ENCODE measurements at regions of chr22 and their contacts with region 1.

Region 1: GRCh38 chr22:42919199-42919598 is 62.1 kb upstream of the ARFGAP3 start:
- DNase-seq: no peak
- ATAC-seq: peak; percentile 36; the same call in 2 of the 3 replicates
- H3K4me3 ChIP-seq: no peak overlapping the region
- H3K27ac ChIP-seq: peak overlapping the region; percentile 33; the same call in 1 of the 2 replicates
- H3K4me1 ChIP-seq: no peaks in the 10 kb centered on the region; the same call in 1 of the 2 replicates
- H3K27me3 ChIP-seq: no peaks in the 10 kb centered on the region
- CTCF ChIP-seq: no peak
- EP300 ChIP-seq: no peak
- POLR2A ChIP-seq: no peak
- RAD21 ChIP-seq: no peak

Region 2: GRCh38 chr22:42889304-42889703 is 29.9 kb before region 1 on chr22:
- CTCF ChIA-PET with region 1: interaction called, 5 read pairs
- POLR2A ChIA-PET with region 1: interaction called, 7 read pairs
- RAD21 ChIA-PET with region 1: interaction called, 16 read pairs
- SMC1A ChIA-PET with region 1: interaction called, 16 read pairs
- in situ Hi-C with region 1: no loop called
- intact Hi-C with region 1: no loop called
- DNase-seq: peak; percentile 97
- ATAC-seq: peak; percentile 90
- H3K4me3 ChIP-seq: peak overlapping the region; percentile 19; the same call in 1 of the 2 replicates
- H3K27ac ChIP-seq: peak overlapping the region; percentile 84
- H3K4me1 ChIP-seq: peaks cover 58% of the 10 kb centered on the region
- H3K27me3 ChIP-seq: no peaks in the 10 kb centered on the region
- CTCF ChIP-seq: no peak
- EP300 ChIP-seq: peak; percentile 89 to 93
- POLR2A ChIP-seq: peak; percentile 52
- RAD21 ChIP-seq: no peak

Region 3: GRCh38 chr22:42895087-42895486 is 24.1 kb before region 1 on chr22:
- CTCF ChIA-PET with region 1: interaction called, 5 read pairs
- POLR2A ChIA-PET with region 1: interaction called, 7 read pairs
- RAD21 ChIA-PET with region 1: interaction called, 16 read pairs
- SMC1A ChIA-PET with region 1: interaction called, 16 read pairs
- in situ Hi-C with region 1: no loop called
- intact Hi-C with region 1: no loop called
- DNase-seq: peak; percentile 76
- ATAC-seq: peak; percentile 81
- H3K4me3 ChIP-seq: no peak overlapping the region
- H3K27ac ChIP-seq: peak overlapping the region; percentile 69
- H3K4me1 ChIP-seq: peaks cover 68% of the 10 kb centered on the region
- H3K27me3 ChIP-seq: no peaks in the 10 kb centered on the region
- CTCF ChIP-seq: no peak
- EP300 ChIP-seq: no peak
- POLR2A ChIP-seq: no peak
- RAD21 ChIP-seq: no peak

Region 4: GRCh38 chr22:44037519-44038370 is 1118.5 kb after region 1 on chr22:
- CTCF ChIA-PET with region 1: no interaction called
- POLR2A ChIA-PET with region 1: no interaction called
- RAD21 ChIA-PET with region 1: no interaction called
- SMC1A ChIA-PET with region 1: no interaction called
- in situ Hi-C with region 1: loop called (anchors 10 kb)
- intact Hi-C with region 1: no loop called
- DNase-seq: no peak
- ATAC-seq: no peak
- H3K4me3 ChIP-seq: no peak overlapping the region
- H3K27ac ChIP-seq: no peak overlapping the region
- H3K4me1 ChIP-seq: peaks cover 18% of the 10 kb centered on the region
- H3K27me3 ChIP-seq: no peaks in the 10 kb centered on the region
- CTCF ChIP-seq: no peak
- EP300 ChIP-seq: no peak
- POLR2A ChIP-seq: no peak
- RAD21 ChIP-seq: no peak

Measured in GM12878 (cell line).